Dendritic cell treated with granulocyte-macrophage colony-stimulating factor and Interleukin-4, amounts not matched to agents 40 ng/mL and 50 ng/mL, for 4 days (primary cell): ENCODE measurements at regions of chr3 and their contacts with region 1.

Region 1: DNA sequence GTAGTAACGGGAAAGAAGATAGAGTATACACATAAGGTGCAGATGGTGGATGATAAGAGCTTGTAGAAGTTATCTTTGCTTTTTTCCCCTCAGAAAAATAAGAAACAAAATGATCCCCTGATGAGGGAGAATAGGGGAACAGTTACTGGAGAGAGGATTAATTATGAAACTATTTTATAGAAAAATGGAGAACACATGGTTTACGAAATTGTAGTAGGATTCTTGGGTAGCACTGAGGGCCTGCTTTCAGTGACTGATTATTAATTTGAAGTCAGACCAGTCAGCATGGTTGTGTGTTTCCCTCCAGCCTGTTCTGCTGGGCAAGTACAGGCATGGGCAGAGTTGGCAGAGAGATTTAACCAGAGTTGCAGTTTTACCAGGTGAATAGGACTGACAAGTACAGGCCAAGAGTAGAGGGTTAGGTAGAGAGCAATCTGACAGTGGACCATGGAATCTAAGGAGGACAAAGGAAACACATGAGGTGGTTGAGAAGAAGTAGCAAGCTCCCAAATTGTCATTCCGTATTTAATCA is 5.9 kb downstream of the SLC49A4 start:
- H3K4me3 Mint-ChIP-seq: no peak overlapping the region
- H3K27ac Mint-ChIP-seq: no peak overlapping the region
- H3K4me1 Mint-ChIP-seq: peaks cover 20% of the 10 kb centered on the region
- H3K27me3 Mint-ChIP-seq: no peaks in the 10 kb centered on the region

Region 2: DNA sequence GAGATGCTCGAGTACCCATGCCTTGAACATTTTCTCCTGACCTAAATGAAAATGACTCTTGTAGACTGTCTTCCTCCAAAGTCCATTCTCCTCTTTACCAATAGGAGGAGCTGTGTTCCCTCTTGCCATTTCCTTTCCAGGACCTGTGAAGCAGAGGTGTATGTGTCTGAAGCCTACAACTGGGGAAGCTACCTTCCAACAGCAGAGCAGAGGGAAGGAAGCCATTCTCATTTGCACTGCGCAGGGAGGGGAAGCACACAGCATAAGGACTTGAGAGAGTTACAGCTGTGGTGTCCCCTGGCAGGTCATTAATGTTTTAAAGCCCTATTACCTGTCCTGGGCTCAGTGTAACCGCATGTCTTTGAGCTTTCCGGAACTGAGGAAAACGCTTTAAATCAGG is 45.8 kb before region 1 on chr3:
- intact Hi-C with region 1: loop called (anchors 2 kb)
- H3K4me3 Mint-ChIP-seq: no peak overlapping the region
- H3K27ac Mint-ChIP-seq: no peak overlapping the region
- H3K4me1 Mint-ChIP-seq: peaks cover 37% of the 10 kb centered on the region
- H3K27me3 Mint-ChIP-seq: no peaks in the 10 kb centered on the region

Region 3: DNA sequence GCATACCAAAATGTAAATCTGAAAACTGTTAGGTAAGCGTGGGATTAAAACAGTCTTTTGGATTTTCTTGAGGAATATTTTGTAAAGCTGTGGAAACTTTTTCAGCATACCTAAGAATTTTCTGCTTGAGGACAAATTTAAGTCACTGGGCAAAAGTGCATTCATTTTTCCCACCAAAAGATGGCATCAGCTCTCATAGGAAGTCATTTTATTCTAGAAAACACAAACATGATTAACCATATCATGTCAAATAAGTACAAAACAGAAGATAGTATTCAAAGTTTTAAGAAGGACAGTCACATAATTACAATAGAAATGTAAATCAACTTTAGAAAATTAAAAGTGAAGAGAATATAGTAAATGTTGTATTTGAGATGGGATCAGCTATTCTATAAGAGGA is 57.6 kb after region 1 on chr3:
- intact Hi-C with region 1: loop called (anchors 10 kb)
- H3K4me3 Mint-ChIP-seq: no peak overlapping the region
- H3K27ac Mint-ChIP-seq: no peak overlapping the region
- H3K4me1 Mint-ChIP-seq: peaks cover 6% of the 10 kb centered on the region
- H3K27me3 Mint-ChIP-seq: no peaks in the 10 kb centered on the region